ENCODE measurements at regions of chr17 and their contacts with region 1.

Region 1: DNA sequence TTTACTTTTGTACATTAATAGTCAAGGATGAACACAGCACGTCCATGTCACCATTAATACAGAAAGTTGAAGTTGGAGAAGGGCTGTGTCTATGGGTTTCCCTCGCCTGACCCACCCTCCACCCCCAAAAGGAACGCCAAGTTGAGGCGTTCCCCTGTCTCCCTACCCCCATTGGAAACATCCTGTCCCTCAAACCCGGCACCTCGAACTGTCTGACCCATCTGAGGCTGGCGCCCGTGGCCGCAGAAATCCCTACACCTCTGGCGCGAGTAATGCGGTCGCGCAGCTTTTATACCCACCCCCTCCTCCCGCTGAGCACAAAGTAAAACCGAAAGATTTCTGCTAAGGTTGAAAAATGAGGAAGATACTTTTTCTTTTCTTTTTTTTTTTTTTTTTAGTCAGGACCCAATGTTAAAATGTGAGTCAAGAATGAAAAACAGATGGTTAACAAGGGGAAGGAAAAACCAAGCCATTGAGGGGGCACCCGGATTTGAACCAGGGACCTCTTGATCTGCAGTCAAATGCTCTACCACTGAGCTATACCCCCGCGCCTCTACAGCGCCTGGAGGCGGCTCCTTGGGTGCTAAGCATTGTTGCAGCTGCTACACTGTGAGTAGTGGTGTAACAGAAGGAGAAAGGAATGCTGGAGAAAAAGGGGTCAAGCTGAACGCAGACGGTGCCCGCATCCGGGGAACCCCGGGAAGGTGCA is 887 bp upstream of the LASP1 start:
- DNase-seq: peak; percentile 84
- ATAC-seq: peak; percentile 53
- H3K4me3 Mint-ChIP-seq: peak overlapping the region; percentile 99
- H3K27ac Mint-ChIP-seq: peak overlapping the region; percentile 96
- H3K4me1 Mint-ChIP-seq: peaks cover 72% of the 10 kb centered on the region
- H3K27me3 Mint-ChIP-seq: peaks cover 2% of the 10 kb centered on the region
- CTCF ChIP-seq: no peak

Region 2: GRCh38 chr17:38690386-38690785 is 178.6 kb before region 1 on chr17:
- CTCF ChIA-PET with region 1: no interaction called
- POLR2A ChIA-PET with region 1: no interaction called
- intact Hi-C with region 1: no loop called
- DNase-seq: no peak
- ATAC-seq: no peak
- H3K4me3 Mint-ChIP-seq: no peak overlapping the region
- H3K27ac Mint-ChIP-seq: no peak overlapping the region
- H3K4me1 Mint-ChIP-seq: no peaks in the 10 kb centered on the region
- H3K27me3 Mint-ChIP-seq: peaks cover 6% of the 10 kb centered on the region
- CTCF ChIP-seq: no peak

Region 3: GRCh38 chr17:38702166-38702899 is 166.6 kb before region 1 on chr17:
- CTCF ChIA-PET with region 1: no interaction called
- POLR2A ChIA-PET with region 1: interaction called, 25 read pairs
- intact Hi-C with region 1: loop called (anchors 2 kb)
- DNase-seq: peak; percentile 77
- ATAC-seq: peak; percentile 28
- H3K4me3 Mint-ChIP-seq: peak overlapping the region; percentile 96
- H3K27ac Mint-ChIP-seq: peak overlapping the region; percentile 99
- H3K4me1 Mint-ChIP-seq: peaks cover 48% of the 10 kb centered on the region
- H3K27me3 Mint-ChIP-seq: no peaks in the 10 kb centered on the region
- CTCF ChIP-seq: no peak

Region 4: GRCh38 chr17:38824899-38825761 is 43.8 kb before region 1 on chr17 and contains the start of gene CWC25:
- CTCF ChIA-PET with region 1: no interaction called
- POLR2A ChIA-PET with region 1: interaction called, 36 read pairs
- intact Hi-C with region 1: loop called (anchors 1 kb)
- DNase-seq: peak; percentile 99
- ATAC-seq: peak; percentile 80
- H3K4me3 Mint-ChIP-seq: peak within 1 kb of the TSS; percentile 98
- H3K27ac Mint-ChIP-seq: peak within 1 kb of the TSS; percentile 99
- H3K4me1 Mint-ChIP-seq: peaks cover 29% of the 10 kb centered on the region
- H3K27me3 Mint-ChIP-seq: peaks cover 3% of the 10 kb centered on the region
- CTCF ChIP-seq: no peak
- total RNA-seq, gene CWC25: 35.6 and 38.3 TPM in 2 replicates

Region 5: DNA sequence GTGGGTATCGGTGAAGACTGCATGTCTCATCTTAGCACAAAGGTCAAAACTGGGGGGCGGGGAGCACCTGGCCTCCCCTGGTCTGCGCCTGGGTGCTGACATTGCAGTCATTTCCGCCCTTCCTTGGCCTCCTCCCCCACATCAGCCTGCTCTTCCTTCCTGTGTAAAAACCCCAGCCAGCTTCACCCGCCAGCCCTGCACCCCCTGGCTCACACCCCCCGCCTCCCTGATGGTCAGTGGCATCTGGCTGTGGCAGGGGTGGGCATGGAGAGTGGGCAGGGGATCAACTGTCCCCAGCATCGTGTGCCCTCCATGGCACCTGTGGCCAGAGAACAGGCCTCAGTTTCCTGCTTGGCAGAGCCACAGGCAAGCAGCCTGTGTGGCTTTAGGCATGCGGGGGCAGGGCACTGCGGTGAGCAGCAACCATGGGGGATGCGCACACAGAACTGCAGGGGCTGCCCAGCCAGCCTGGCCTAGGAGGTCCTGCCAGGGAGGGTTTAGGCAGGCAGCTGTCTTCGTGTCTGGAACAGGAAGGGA is 29.9 kb after region 1 on chr17:
- CTCF ChIA-PET with region 1: interaction called, 21 read pairs
- POLR2A ChIA-PET with region 1: interaction called, 256 read pairs
- intact Hi-C with region 1: loop called (anchors 1 kb)
- DNase-seq: peak; percentile 68
- ATAC-seq: peak; percentile 93
- H3K4me3 Mint-ChIP-seq: peak overlapping the region; percentile 55
- H3K27ac Mint-ChIP-seq: peak overlapping the region; percentile 93
- H3K4me1 Mint-ChIP-seq: peaks cover 42% of the 10 kb centered on the region
- H3K27me3 Mint-ChIP-seq: no peaks in the 10 kb centered on the region
- CTCF ChIP-seq: no peak

Region 6: DNA sequence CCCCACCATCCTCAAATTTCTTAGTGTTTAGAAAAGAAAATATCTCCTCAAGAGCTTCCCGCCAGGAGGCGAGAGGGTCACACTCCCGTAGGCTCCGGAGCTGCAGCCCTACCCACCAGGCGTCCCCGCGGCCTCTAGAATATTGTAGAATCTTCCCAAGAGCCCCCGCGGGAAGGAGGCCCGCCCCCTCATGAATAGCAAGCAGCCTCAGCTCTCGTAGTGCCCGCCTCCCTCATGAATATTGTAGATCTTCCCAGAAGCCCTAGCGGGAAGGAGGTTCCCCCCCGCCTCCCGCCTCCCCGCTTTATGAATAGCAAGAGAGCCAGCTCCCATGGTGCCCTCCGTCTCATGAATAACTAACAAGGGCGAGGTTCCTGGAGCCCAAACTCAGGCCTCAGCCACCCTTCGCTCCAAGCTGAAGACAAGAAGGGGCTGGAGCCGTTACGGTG is 98.3 kb after region 1 on chr17 and contains the start of gene FBXO47:
- CTCF ChIA-PET with region 1: no interaction called
- POLR2A ChIA-PET with region 1: interaction called, 40 read pairs
- intact Hi-C with region 1: loop called (anchors 1 kb)
- DNase-seq: peak; percentile 64
- ATAC-seq: peak; percentile 99
- H3K4me3 Mint-ChIP-seq: peak within 1 kb of the TSS; percentile 78
- H3K27ac Mint-ChIP-seq: peak within 1 kb of the TSS; percentile 85
- H3K4me1 Mint-ChIP-seq: peaks cover 10% of the 10 kb centered on the region
- H3K27me3 Mint-ChIP-seq: no peaks in the 10 kb centered on the region
- CTCF ChIP-seq: no peak
- total RNA-seq, gene FBXO47: not detected in 2 replicates

Region 7: DNA sequence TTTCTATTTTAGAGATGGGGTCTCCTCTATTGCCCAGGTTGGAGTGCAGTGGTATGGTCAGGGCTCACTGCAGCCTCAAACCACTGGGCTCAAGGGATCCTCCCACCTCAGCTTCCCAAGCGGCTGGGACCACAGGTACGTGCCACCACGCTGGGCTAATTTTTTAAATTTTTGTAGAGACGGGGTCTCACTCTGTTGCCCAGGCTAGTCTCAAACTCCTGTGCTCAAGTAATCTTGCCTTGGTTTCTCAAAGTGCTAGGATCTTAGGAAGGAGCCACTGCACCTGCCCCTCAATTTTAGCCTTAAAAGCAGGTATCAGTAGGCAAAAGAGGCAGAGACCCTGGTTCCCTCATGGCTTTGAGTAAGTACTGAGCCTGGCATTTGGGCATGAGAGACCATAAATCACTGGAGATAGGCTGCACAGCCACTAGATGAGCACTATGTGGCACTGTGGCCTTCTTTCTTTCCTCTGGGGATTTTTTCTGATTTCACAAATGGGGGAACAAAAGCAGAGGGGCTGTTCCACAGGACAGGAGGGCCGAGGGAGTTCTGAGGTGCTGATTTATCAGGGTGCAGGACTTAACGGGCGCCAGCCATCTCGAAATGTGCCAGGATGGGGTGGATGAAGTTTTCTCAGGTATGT is 200.3 kb after region 1 on chr17:
- CTCF ChIA-PET with region 1: no interaction called
- POLR2A ChIA-PET with region 1: no interaction called
- intact Hi-C with region 1: no loop called
- DNase-seq: no peak
- ATAC-seq: peak; percentile 85
- H3K4me3 Mint-ChIP-seq: no peak overlapping the region
- H3K27ac Mint-ChIP-seq: no peak overlapping the region
- H3K4me1 Mint-ChIP-seq: no peaks in the 10 kb centered on the region
- H3K27me3 Mint-ChIP-seq: no peaks in the 10 kb centered on the region
- CTCF ChIP-seq: no peak

Region 8: GRCh38 chr17:39199820-39200069 is 330.8 kb after region 1 on chr17:
- CTCF ChIA-PET with region 1: no interaction called
- POLR2A ChIA-PET with region 1: interaction called, 11 read pairs
- intact Hi-C with region 1: no loop called
- DNase-seq: peak; percentile 65
- ATAC-seq: peak; percentile 65
- H3K4me3 Mint-ChIP-seq: peak overlapping the region; percentile 99
- H3K27ac Mint-ChIP-seq: peak overlapping the region; percentile 100
- H3K4me1 Mint-ChIP-seq: peaks cover 69% of the 10 kb centered on the region
- H3K27me3 Mint-ChIP-seq: no peaks in the 10 kb centered on the region
- CTCF ChIP-seq: no peak